ENCODE measurements at regions of chr4 and their contacts with region 1.

Region 1: GRCh38 chr4:153204247-153205027 is at the start of gene TRIM2:
- DNase-seq: no peak
- H3K4me3 Mint-ChIP-seq: peak within 1 kb of the TSS; percentile 39
- H3K27ac Mint-ChIP-seq: peak within 1 kb of the TSS; percentile 66
- H3K4me1 Mint-ChIP-seq: peaks cover 34% of the 10 kb centered on the region
- H3K27me3 Mint-ChIP-seq: no peaks in the 10 kb centered on the region
- total RNA-seq, gene TRIM2: 3.8 to 4.2 TPM

Region 2: DNA sequence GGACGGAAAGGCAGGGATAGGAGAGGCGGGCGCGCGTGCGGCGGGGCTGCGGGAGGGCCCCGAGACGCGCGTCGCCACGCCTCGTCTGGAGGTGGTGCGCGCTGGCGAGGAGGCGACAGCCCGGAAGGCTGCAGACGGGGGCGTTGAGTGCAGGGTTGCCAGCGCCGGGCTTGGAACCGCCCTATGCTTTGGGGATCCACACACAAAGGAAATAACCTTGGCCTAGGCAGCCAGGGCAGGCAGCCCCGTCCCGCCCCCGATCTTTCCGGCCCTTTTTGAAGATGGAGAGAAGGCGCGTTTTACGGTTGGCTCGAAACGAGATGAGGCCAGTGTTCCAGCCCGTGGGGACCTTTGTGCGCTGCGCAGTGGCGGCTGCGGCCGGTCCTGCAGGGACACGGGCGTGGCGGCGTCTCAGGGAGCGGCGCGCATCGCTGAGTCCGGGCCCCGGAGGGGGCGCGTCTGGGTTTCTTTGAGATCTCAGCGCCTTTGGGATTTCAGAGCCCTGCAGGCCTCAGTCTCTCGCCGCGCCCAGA is 51.0 kb before region 1 on chr4:
- CTCF ChIA-PET with region 1: no interaction called
- intact Hi-C with region 1: loop called (anchors 2 kb)
- DNase-seq: peak; percentile 91
- H3K4me3 Mint-ChIP-seq: peak overlapping the region; percentile 80
- H3K27ac Mint-ChIP-seq: peak overlapping the region; percentile 86
- H3K4me1 Mint-ChIP-seq: peaks cover 58% of the 10 kb centered on the region
- H3K27me3 Mint-ChIP-seq: no peaks in the 10 kb centered on the region

Region 3: DNA sequence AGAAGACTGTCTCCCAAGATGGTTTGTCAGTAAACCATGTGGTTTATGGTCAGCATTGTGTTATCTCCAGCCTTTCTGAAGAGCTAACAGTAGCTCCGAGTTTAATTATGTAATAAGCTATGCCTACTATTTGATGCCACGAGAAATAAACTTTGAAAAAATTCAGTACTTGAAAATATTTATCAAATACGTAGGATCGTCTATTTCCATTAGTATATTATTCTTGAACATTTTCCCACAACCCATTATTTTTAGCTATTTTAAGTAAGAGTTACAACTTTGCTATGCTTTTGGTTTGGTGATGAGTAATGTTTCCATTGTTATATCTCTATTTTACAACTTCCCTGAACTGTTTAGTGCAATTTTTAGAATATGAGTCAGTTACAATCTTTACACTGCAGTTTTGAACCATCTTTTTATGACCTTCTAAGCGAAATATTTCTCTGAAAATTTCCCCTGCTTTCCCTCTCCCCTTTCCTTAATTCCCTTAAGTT is 44.7 kb before region 1 on chr4:
- CTCF ChIA-PET with region 1: no interaction called
- intact Hi-C with region 1: loop called (anchors 2 kb)
- DNase-seq: no peak
- H3K4me3 Mint-ChIP-seq: no peak overlapping the region
- H3K27ac Mint-ChIP-seq: peak overlapping the region; percentile 90
- H3K4me1 Mint-ChIP-seq: peaks cover 54% of the 10 kb centered on the region
- H3K27me3 Mint-ChIP-seq: no peaks in the 10 kb centered on the region

Region 4: DNA sequence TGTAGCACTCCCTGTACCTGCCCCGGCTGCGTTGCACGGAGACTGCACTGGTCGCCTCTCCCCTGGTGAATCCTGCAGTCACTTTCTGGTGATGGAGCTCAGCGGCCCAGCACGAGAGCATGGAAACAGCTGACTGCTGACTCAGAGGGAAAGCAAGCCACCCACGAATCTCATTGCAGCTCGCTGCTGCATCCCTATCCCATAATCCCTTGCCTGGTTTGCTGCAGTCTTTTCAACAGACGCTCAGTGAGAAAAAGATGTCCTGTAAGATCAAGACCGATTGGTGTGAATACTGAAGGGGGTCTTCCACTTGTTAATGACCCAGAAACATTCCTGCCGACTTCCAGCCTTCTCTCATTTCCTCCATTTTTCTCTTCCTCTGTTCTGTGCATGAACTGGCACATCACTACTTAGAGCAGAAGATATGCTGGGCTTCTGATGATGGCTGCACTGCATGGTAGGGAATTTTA is 52.7 kb after region 1 on chr4:
- CTCF ChIA-PET with region 1: no interaction called
- intact Hi-C with region 1: no loop called
- DNase-seq: peak; percentile 76
- H3K4me3 Mint-ChIP-seq: no peak overlapping the region
- H3K27ac Mint-ChIP-seq: no peak overlapping the region
- H3K4me1 Mint-ChIP-seq: peaks cover 1% of the 10 kb centered on the region
- H3K27me3 Mint-ChIP-seq: no peaks in the 10 kb centered on the region

Region 5: DNA sequence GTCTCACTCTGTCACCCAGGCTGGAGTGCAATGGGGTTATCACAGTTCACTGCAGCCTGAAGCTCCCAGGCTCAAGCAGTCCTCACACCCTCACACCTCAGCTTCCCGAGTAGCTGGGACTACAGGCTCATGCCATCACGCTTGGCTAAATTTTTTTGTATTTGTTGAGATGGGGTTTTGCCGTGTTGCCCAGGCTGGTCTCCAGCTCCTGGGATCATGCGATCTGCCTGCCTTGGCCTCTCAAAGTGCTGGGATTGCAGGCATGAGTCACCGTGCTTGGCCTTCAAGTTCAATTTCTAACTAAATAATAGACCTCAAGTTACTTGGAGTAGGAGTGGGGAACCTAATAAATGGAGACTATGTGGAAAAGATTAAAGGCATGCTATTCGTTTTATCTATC is 189.0 kb after region 1 on chr4:
- CTCF ChIA-PET with region 1: no interaction called
- intact Hi-C with region 1: no loop called
- DNase-seq: no peak
- H3K4me3 Mint-ChIP-seq: no peak overlapping the region
- H3K27ac Mint-ChIP-seq: no peak overlapping the region
- H3K4me1 Mint-ChIP-seq: peaks cover 6% of the 10 kb centered on the region
- H3K27me3 Mint-ChIP-seq: no peaks in the 10 kb centered on the region

Measured in activated naive CD4-positive, alpha-beta T cell treated with anti-CD3 and anti-CD28 coated beads for 36 hours (primary cell).